ENCODE measurements at regions of chr15 and their contacts with region 1.

Region 1: DNA sequence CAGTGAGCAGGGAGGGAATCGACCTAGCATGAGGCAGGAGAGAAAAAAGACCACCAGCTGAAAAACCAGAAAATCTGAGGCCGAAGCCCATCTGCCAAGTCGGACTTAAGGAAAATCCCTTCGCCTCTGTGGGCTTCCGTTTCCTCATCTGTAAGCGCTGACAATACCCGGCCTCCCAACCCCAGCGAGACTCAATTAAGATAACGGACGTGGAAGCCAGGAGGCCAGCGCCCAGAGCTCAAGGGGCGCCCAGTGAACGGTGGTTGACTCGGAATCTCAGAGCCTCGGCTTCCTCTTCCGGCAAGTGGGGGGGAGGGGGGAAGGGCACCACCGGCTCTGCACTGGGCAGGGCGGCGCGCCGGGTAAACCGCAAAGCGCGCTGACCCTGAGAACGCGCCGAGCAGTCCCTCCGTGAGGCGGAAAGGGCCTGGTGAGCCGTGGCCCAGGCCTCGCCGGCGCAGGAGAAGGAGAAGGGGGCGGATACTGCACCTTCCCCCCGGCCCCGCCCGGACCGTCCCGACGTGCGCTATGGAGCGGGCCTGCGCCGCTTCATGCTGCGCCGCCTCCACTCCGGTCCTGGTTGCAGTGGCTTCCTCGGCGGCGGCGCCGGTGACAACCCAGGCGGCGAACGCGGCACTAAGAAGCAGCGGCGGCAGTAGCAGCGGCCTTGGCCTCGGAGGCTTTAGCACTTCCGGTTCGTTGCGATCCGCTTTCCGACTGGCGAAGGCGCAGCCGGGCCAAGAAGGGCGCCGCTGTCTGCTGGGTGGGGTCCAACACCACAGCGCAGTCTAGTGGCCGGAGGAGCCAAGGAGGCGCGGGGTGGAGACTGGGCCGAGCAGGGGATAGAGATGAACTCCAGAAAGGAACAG is at the start of gene DPP8:
- DNase-seq: peak; percentile 94
- ATAC-seq: peak; percentile 93
- H3K4me3 Mint-ChIP-seq: peak within 1 kb of the TSS; percentile 89
- H3K27ac Mint-ChIP-seq: peak within 1 kb of the TSS; percentile 90
- H3K4me1 Mint-ChIP-seq: peaks cover 18% of the 10 kb centered on the region
- H3K27me3 Mint-ChIP-seq: no peaks in the 10 kb centered on the region
- total RNA-seq, gene DPP8: 48.7 to 52.2 TPM

Region 2: DNA sequence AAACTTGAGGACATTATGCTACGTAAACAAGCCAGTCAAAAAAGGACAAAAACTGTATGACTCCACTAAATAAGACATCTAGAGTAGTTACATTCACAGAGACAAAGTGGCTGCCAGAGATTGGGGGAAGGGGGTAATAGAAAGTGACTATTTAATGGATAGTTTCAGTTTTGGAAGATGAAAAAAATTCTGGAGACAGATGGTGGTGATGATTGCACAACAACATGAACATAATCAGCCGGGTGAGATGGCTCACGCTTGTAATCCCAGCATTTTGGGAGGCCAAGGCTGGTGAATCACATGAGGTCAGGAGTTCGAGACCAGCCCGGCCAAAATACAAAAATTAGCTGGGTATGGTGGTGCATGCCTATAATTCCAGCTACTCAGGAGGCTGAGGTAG is 40.3 kb before region 1 on chr15:
- POLR2A ChIA-PET with region 1: no interaction called
- DNase-seq: no peak
- ATAC-seq: no peak
- H3K4me3 Mint-ChIP-seq: no peak overlapping the region
- H3K27ac Mint-ChIP-seq: no peak overlapping the region
- H3K4me1 Mint-ChIP-seq: peaks cover 4% of the 10 kb centered on the region
- H3K27me3 Mint-ChIP-seq: no peaks in the 10 kb centered on the region

Region 3: GRCh38 chr15:65530314-65531122 is 13.3 kb after region 1 on chr15 and contains the start of gene HACD3:
- POLR2A ChIA-PET with region 1: interaction called, 28 read pairs
- DNase-seq: peak; percentile 98
- ATAC-seq: peak; percentile 97
- H3K4me3 Mint-ChIP-seq: peak within 1 kb of the TSS; percentile 77
- H3K27ac Mint-ChIP-seq: peak within 1 kb of the TSS; percentile 83
- H3K4me1 Mint-ChIP-seq: peaks cover 29% of the 10 kb centered on the region
- H3K27me3 Mint-ChIP-seq: peaks cover 2% of the 10 kb centered on the region
- total RNA-seq, gene HACD3: 33.3 to 34.5 TPM

Region 4: GRCh38 chr15:65610871-65611718 is 93.9 kb after region 1 on chr15 and contains the start of gene INTS14:
- POLR2A ChIA-PET with region 1: interaction called, 17 read pairs
- DNase-seq: peak; percentile 95
- ATAC-seq: peak; percentile 98
- H3K4me3 Mint-ChIP-seq: peak within 1 kb of the TSS; percentile 89
- H3K27ac Mint-ChIP-seq: peak within 1 kb of the TSS; percentile 95
- H3K4me1 Mint-ChIP-seq: peaks cover 26% of the 10 kb centered on the region
- H3K27me3 Mint-ChIP-seq: no peaks in the 10 kb centered on the region
- total RNA-seq, gene INTS14: 42.8 to 43.0 TPM